Activated CD4-positive, alpha-beta T cell treated with anti-CD3 and anti-CD28 coated beads, Interleukin-2, amount 10 ng/mL, durations not matched to agents 24 days and 14 days (primary cell): ENCODE measurements at regions of chr3 and their contacts with region 1.

Region 1: GRCh38 chr3:196274585-196274984 is 12.9 kb downstream of the PCYT1A start:
- DNase-seq: peak; percentile 93
- H3K4me3 Mint-ChIP-seq: peak overlapping the region; percentile 74
- H3K27ac Mint-ChIP-seq: peak overlapping the region; percentile 88
- H3K4me1 Mint-ChIP-seq: peaks cover 54% of the 10 kb centered on the region
- H3K27me3 Mint-ChIP-seq: no peaks in the 10 kb centered on the region

Region 2: DNA sequence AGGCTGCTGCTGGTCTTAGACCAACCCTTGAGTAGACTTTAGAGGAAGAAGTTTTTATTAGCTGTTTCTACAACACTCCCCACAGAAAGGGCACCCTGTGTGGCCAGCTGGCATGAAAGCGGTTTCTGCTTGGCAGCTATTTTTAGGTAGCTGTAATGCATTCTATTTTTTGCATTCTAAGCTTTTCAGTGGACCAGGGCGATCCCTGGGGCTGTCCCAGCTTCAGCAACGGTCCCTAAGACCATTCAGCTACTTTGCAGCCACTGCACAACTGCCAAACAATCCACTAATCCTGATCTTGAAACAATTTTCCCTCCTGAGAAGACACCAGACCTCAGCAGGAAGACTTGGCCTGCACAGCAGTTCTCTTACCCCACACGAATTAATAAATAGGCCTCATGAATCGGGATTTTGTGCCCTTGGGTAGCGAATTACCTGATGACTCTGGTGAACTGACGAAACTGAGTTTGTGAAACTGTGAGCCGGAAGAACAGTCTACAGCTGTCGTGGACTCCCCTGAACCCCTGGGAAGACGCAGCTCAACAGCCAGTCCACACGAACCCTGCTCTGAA is 178.1 kb before region 1 on chr3:
- intact Hi-C with region 1: no loop called
- DNase-seq: no peak
- H3K4me3 Mint-ChIP-seq: no peak overlapping the region
- H3K27ac Mint-ChIP-seq: no peak overlapping the region
- H3K4me1 Mint-ChIP-seq: peaks cover 8% of the 10 kb centered on the region
- H3K27me3 Mint-ChIP-seq: no peaks in the 10 kb centered on the region

Region 3: GRCh38 chr3:196207833-196208607 is 66.6 kb before region 1 on chr3:
- intact Hi-C with region 1: no loop called
- DNase-seq: peak; percentile 85
- H3K4me3 Mint-ChIP-seq: peak overlapping the region; percentile 82
- H3K27ac Mint-ChIP-seq: peak overlapping the region; percentile 18
- H3K4me1 Mint-ChIP-seq: peaks cover 16% of the 10 kb centered on the region
- H3K27me3 Mint-ChIP-seq: peaks cover 28% of the 10 kb centered on the region

Region 4: GRCh38 chr3:196237203-196237602 is 37.4 kb before region 1 on chr3:
- intact Hi-C with region 1: no loop called
- DNase-seq: no peak
- H3K4me3 Mint-ChIP-seq: no peak overlapping the region
- H3K27ac Mint-ChIP-seq: no peak overlapping the region
- H3K4me1 Mint-ChIP-seq: peaks cover 10% of the 10 kb centered on the region
- H3K27me3 Mint-ChIP-seq: no peaks in the 10 kb centered on the region

Region 5: DNA sequence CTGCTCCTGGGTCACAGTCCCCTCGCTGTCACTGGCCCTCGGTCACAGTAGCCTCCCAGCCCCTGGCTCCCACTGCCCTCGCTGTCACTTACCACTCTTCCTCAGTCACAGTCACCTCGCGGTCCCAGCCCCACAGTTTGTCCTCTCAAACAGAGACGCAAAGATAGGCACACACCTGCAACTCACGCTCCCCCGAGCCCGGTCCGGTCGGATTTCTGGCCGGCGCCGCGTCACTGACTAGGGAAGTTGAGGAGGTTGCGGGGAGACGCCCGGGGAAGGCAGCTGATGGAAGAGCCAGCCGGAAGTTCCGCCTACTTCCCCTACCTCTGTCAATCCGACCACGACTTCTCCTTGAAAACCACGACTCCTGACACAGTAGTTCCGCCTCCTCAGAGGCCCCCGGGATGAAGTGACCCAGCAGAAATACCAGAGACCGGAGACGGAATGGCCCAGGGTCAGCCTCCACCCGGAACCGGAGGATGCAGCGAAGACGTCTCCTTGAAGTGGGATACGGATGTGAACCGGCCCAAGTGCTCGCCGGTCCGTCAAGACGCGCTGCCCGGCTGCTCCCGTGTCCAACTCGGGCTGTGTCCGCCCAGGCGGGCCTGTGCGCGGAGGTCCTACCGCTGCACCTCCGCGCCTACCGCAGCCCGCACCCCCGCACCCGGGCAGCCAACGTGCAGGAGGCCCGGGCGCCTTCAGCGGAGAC is 13.0 kb after region 1 on chr3 and contains the start of gene PCYT1A:
- intact Hi-C with region 1: loop called (anchors 1 kb)
- DNase-seq: peak; percentile 93
- H3K4me3 Mint-ChIP-seq: peak within 1 kb of the TSS; percentile 99
- H3K27ac Mint-ChIP-seq: peak within 1 kb of the TSS; percentile 98
- H3K4me1 Mint-ChIP-seq: peaks cover 35% of the 10 kb centered on the region
- H3K27me3 Mint-ChIP-seq: no peaks in the 10 kb centered on the region
- total RNA-seq, gene PCYT1A: 54.2 and 56.0 TPM in 2 replicates

Region 6: GRCh38 chr3:196317687-196318467 is 43.3 kb after region 1 on chr3 and contains the start of gene DYNLT2B:
- intact Hi-C with region 1: loop called (anchors 1 kb)
- DNase-seq: peak; percentile 97
- H3K4me3 Mint-ChIP-seq: peak within 1 kb of the TSS; percentile 95
- H3K27ac Mint-ChIP-seq: peak within 1 kb of the TSS; percentile 98
- H3K4me1 Mint-ChIP-seq: peaks cover 11% of the 10 kb centered on the region
- H3K27me3 Mint-ChIP-seq: no peaks in the 10 kb centered on the region
- total RNA-seq, gene DYNLT2B: 11.8 and 12.8 TPM in 2 replicates

Region 7: GRCh38 chr3:196528639-196529233 is 254.2 kb after region 1 on chr3:
- intact Hi-C with region 1: loop called (anchors 5 kb)
- DNase-seq: peak; percentile 95
- H3K4me3 Mint-ChIP-seq: peak overlapping the region; percentile 75
- H3K27ac Mint-ChIP-seq: peak overlapping the region; percentile 82
- H3K4me1 Mint-ChIP-seq: peaks cover 12% of the 10 kb centered on the region
- H3K27me3 Mint-ChIP-seq: peaks cover 12% of the 10 kb centered on the region

Region 8: DNA sequence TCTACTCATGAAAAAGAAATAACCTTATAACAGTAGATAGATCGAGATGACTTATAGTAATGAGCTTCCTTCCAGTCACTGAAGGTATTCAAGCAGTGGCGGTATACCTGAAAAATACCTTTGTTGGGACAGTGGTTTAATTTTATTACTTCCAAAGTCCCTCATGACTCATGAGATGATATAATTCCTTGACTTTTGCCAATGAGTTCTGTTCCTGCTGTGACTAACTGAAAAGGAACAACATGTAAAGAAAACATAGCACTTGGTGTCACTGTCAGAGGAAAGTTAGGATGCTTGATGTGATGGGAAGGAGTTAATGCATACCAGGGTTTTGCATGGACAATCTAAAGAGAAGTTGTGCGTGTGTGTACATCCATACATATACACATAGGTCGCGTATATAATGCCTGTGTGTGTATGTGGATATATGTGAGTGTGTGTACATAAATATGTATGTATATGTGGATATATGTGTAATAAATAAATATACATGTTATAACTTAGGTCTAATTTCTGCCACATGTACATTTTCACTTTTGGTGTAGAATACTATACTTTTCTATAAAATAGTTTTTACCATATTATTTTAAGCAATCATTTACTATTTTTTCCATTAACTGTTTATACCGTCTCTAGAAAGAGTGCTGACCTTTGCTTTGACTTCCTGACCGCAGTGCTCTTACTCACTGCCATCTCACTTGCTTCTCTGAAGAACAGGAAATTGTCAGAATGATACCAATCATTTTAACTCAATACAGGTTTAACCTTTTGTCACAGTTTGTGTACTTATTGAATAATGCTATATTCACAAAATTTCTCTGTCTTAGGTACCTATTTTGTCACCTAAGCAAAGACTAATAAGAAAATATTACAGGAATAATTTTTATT is 452.4 kb after region 1 on chr3:
- intact Hi-C with region 1: loop called (anchors 10 kb)
- DNase-seq: peak; percentile 67
- H3K4me3 Mint-ChIP-seq: peak overlapping the region; percentile 39
- H3K27ac Mint-ChIP-seq: peak overlapping the region; percentile 79
- H3K4me1 Mint-ChIP-seq: peaks cover 25% of the 10 kb centered on the region
- H3K27me3 Mint-ChIP-seq: no peaks in the 10 kb centered on the region